HepG2 (cell line): ENCODE measurements at regions of chr17 and their contacts with region 1.

Region 1: DNA sequence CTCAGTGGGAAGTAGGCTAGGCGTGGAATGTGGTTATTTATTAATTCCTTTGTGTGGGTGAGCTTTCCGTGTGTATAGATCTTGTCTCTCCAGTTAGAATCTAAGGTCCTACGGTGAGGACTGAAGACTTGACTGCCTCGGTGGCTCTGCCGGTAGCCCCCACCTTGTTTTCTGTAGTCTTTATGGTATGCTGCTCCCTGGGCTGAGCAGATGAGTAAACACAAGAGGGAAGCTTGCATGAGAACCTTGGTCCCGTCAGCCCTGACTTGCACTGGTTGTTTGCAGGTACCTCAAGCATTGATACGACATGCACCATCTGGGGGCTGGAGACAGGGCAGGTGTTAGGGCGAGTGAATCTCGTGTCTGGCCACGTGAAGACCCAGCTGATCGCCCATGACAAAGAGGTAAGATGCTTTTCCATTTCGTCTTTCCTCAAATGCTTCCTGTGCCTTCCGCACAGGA is 21.1 kb upstream of the TACO1 start:
- DNase-seq: peak; percentile 83
- ATAC-seq: peak; percentile 58
- H3K4me3 ChIP-seq: peak overlapping the region in 2 of 3 experiments; percentile 8 to 33; a peak in 2 of 6 replicates
- H3K27ac ChIP-seq: peak overlapping the region; percentile 83
- H3K4me1 ChIP-seq: peaks cover 46% of the 10 kb centered on the region
- H3K27me3 ChIP-seq: no peaks in the 10 kb centered on the region
- CTCF ChIP-seq: peak; percentile 31; the same call in 1 of the 2 replicates
- EP300 ChIP-seq: peak in 1 of 2 experiments; percentile 53; a peak in 2 of 4 replicates
- POLR2A ChIP-seq: no peak
- RAD21 ChIP-seq: no peak

Region 2: DNA sequence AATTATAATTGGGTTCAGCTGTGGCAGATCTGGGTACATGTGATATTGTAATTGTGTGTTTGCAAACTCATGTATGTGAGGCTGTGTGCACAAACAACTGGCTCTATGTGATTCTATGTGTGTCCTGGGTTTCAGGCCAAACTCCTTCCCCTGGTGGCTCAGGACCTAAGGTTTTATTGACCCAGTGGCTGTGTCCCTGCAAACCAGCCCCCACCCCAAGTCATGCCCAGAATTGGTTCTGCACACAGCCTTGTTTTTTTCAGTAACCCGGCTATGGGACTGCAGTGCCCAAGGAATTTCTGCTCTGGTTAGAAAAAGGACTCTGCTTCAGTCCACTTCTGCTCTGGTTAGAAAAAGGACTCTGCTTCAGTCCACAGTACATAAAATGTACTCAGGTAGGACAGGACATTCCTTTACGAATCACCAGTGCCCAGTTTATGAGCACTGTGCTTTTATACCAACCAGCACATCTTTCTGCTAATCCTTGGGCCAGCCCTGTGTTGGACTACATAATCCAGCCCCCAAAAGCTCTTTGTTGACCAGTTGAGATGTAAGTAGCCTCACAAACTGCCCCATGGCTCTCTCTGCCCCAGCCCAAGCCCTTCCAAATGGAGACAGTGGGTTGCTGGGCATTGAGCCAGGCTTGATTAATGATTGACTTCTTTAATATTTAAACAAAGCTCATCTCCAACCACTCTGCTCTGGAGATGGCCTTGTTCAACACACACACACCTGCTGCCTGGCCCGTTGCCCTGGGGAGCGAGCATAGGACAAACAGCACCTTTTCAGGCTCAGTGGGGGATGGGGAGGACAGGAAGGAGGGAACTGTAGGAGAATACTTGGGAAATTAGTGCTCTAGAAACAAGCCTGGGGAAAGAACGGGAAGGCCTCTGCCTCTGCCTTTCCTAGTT is 59.3 kb before region 1 on chr17:
- CTCF ChIA-PET with region 1: no interaction called
- POLR2A ChIA-PET with region 1: interaction called, 5 read pairs
- in situ Hi-C with region 1: no loop called
- intact Hi-C with region 1: loop called (anchors 5 kb)
- DNase-seq: peak; percentile 96
- ATAC-seq: peak; percentile 84
- H3K4me3 ChIP-seq: peak overlapping the region in 1 of 3 experiments; percentile 47; a peak in 2 of 6 replicates
- H3K27ac ChIP-seq: peak overlapping the region; percentile 71
- H3K4me1 ChIP-seq: peaks cover 79% of the 10 kb centered on the region
- H3K27me3 ChIP-seq: peaks cover 7 to 55% of the 10 kb centered on the region in 2 experiments; a peak in 4 of 5 replicates
- CTCF ChIP-seq: no peak
- EP300 ChIP-seq: peak; percentile 49 to 88; a peak in 3 of 4 replicates
- POLR2A ChIP-seq: peak in 1 of 2 experiments; percentile 24; a peak in 2 of 4 replicates
- RAD21 ChIP-seq: no peak